ENCODE measurements at regions of chr17 and their contacts with region 1.

Region 1: GRCh38 chr17:28335201-28335955 is at the starts of genes IFT20 and TNFAIP1:
- DNase-seq: peak; percentile 88

Region 2: DNA sequence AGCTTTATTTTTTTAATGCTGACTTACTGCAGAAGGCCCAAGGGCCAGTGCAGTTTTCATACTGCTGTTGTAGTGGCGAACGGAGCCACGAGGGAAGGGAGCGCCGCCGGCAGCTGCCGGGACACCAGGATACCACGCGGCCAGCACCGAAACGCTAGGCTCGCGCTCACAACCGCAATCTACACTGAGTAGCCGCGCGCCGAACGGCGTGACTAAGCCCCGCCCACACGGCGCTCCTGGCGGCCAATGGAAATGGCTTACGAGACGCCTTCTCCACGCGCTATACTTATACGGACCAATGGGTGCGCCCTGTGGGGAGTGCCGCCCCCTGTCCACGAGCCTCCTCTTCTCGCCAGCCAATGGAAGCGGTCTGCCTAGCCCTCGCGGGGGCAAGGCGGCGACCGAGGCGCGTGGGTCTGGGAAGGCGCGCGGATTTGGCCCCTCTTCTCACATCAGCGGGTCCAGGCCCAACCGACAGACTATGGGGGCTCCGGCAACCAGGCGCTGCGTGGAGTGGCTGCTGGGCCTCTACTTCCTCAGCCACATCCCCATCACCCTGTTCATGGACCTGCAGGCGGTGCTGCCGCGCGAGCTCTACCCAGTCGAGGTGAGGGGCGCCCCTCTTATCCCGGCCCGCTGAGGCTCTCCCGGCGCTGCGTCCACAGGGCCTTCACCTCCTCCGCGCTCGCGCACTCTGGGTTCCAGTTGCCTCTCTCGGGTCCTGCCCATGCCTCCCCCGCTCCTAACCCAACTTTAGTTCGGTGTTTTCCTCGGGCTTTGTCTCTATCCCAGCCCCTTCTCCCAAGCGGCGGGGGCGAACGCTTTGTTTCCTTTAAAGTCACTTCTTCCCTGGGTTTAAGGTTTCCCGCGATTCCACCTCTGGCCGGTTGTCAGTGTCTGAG is 16.4 kb before region 1 on chr17 and contains the start of gene TMEM97:
- CTCF ChIA-PET with region 1: interaction called, 8 read pairs
- POLR2A ChIA-PET with region 1: interaction called, 46 read pairs
- DNase-seq: peak; percentile 85

Region 3: GRCh38 chr17:28357061-28357900 is 21.9 kb after region 1 on chr17 and contains the start of gene POLDIP2:
- CTCF ChIA-PET with region 1: no interaction called
- POLR2A ChIA-PET with region 1: interaction called, 59 read pairs
- DNase-seq: peak; percentile 92

Region 4: DNA sequence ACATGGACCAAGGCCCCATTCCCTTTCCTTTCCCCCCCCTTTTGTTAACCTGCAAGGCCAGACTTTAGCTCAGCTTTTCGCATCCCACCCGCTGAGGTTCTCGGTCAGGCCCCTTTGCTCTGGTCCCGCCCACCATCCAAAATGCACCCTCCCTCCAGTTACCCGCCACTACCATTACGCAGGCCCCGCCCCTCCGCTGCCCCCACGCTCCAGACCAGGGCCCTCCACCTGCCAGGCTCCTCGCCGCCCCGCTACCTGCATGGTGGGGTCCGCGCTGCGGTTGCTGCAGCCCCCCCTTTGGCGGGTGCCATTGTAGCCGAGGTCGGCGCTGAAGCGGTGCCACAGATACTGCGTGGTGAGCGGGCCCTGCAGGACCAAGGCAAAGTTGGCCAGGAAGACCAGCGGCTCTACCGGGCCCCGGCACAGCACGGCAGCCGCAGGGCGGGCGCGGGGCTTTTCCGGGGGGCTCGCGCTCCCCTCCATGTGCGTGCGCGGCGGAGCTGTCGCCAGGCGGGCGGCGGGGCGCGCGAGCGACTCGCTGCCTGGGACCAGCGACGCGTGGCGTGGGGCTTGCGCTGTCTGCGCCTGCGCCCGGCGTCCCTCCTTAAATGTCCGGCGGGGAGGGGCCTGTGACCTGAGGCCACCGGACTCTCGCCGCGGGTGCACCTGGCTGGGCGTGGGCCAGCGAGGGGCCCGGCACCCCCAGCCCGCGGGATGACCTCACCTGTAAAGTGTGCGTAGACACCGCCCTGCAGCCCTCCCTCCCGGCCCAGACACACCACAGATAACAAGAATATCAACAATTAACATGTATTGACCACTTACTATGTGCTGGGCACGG is 70.5 kb after region 1 on chr17 and contains the start of gene SLC46A1:
- CTCF ChIA-PET with region 1: no interaction called
- POLR2A ChIA-PET with region 1: interaction called, 12 read pairs
- DNase-seq: peak; percentile 70